ENCODE measurements at regions of chr13 and their contacts with region 1.

Region 1: GRCh38 chr13:84137292-84137691 is 255.0 kb upstream of the SLITRK1 start:
- DNase-seq: peak in 1 of 5 donors; percentile 37
- ATAC-seq: no peak
- H3K4me3 ChIP-seq: no peak overlapping the region
- H3K27ac ChIP-seq: peak overlapping the region in 1 of 12 donors; percentile 68
- H3K4me1 ChIP-seq: peaks cover 0 to 6% (median 0%) of the 10 kb centered on the region in 12 donors
- H3K27me3 ChIP-seq: no peaks in the 10 kb centered on the region
- CTCF ChIP-seq: no peak
- POLR2A ChIP-seq: no peak

Region 2: DNA sequence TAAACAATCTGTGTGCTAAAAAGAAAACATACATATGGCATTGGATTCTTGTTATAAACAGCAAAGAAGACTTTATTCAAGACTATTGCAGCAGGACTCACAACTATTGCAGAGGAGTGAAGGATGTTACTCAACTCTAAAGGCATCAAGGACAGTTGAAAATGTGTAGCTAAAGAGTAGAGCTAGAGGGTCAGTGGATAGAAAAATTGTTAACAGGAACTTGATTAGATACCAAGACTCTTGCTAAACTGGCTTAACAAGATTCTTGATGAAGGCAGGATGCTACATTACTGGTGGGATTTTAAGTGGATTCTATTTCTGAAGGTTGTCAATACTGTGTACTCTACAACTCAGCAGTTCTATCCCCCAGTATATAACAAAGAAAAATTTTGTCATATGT is 1438.4 kb before region 1 on chr13:
- intact Hi-C with region 1: loop called in 1 of 10 experiments (anchors 10 kb)
- DNase-seq: no peak
- ATAC-seq: no peak
- H3K4me3 ChIP-seq: no peak overlapping the region
- H3K27ac ChIP-seq: no peak overlapping the region
- H3K4me1 ChIP-seq: no peaks in the 10 kb centered on the region
- H3K27me3 ChIP-seq: no peaks in the 10 kb centered on the region
- CTCF ChIP-seq: no peak
- POLR2A ChIP-seq: no peak

Region 3: GRCh38 chr13:84249463-84249862 is 112.2 kb after region 1 on chr13:
- intact Hi-C with region 1: no loop called
- DNase-seq: no peak
- ATAC-seq: no peak
- H3K4me3 ChIP-seq: no peak overlapping the region
- H3K27ac ChIP-seq: no peak overlapping the region
- H3K4me1 ChIP-seq: no peaks in the 10 kb centered on the region
- H3K27me3 ChIP-seq: no peaks in the 10 kb centered on the region
- CTCF ChIP-seq: no peak
- POLR2A ChIP-seq: no peak